ENCODE measurements at regions of chr19 and their contacts with region 1.

Region 1: GRCh38 chr19:31548941-31549340 is 199.7 kb upstream of the TSHZ3 start:
- DNase-seq: no peak
- ATAC-seq: peak in 1 of 4 donors; percentile 34
- H3K4me3 ChIP-seq: no peak overlapping the region
- H3K27ac ChIP-seq: no peak overlapping the region
- H3K4me1 ChIP-seq: no peaks in the 10 kb centered on the region
- H3K27me3 ChIP-seq: peaks cover 0 to 7% (median 0%) of the 10 kb centered on the region in 9 donors
- CTCF ChIP-seq: peak; percentile 31 to 60 (median 42)
- POLR2A ChIP-seq: no peak

Region 2: GRCh38 chr19:30669329-30670010 is 879.5 kb before region 1 on chr19:
- intact Hi-C with region 1: loop called in 3 of 10 experiments (anchors 10 kb)
- DNase-seq: peak; percentile 30 to 84 (median 57)
- ATAC-seq: peak in 3 of 4 donors; percentile 12 to 26 (median 21)
- H3K4me3 ChIP-seq: no peak overlapping the region
- H3K27ac ChIP-seq: no peak overlapping the region
- H3K4me1 ChIP-seq: peaks cover 0 to 25% (median 6%) of the 10 kb centered on the region in 12 donors
- H3K27me3 ChIP-seq: peaks cover 0 to 36% (median 11%) of the 10 kb centered on the region in 9 donors
- CTCF ChIP-seq: peak; percentile 61 to 85 (median 81)
- POLR2A ChIP-seq: no peak

Region 3: DNA sequence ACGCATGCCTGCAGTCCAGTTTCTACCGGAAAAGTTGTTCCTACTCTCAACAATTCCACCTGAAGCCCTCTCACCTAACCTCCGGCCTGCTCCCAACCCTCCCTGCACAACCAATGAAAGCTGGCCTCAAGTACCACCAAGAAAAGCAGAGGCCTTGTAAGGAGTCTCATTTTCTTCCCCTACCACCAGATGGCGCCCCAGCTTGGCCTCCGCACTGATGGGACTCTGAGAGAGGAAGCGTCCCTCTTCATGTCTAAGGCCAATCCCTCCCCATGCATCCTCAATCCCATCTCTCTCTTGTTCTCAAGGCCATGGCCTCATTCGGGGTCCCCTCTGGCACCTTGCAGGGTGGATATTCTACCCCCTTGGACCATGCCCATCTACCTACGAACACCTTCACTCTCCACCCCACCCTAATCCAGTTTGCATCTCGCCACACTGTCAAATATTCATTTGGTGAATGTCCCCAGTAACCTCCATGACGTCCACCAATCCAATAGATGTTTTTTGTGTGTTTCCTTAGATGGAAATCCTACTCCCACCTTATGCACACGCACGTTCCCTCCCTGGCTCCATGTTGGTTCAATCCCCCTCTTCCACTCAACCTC is 764.0 kb before region 1 on chr19:
- intact Hi-C with region 1: loop called in 1 of 10 experiments (anchors 10 kb)
- DNase-seq: peak; percentile 20 to 69 (median 44)
- ATAC-seq: peak in 3 of 4 donors; percentile 49 to 57 (median 54)
- H3K4me3 ChIP-seq: no peak overlapping the region
- H3K27ac ChIP-seq: no peak overlapping the region
- H3K4me1 ChIP-seq: no peaks in the 10 kb centered on the region
- H3K27me3 ChIP-seq: peaks cover 0 to 3% (median 0%) of the 10 kb centered on the region in 9 donors
- CTCF ChIP-seq: peak; percentile 31 to 74 (median 54)
- POLR2A ChIP-seq: no peak

Region 4: GRCh38 chr19:31676271-31677004 is 127.5 kb after region 1 on chr19:
- intact Hi-C with region 1: no loop called
- DNase-seq: no peak
- ATAC-seq: peak in 1 of 4 donors; percentile 29
- H3K4me3 ChIP-seq: no peak overlapping the region
- H3K27ac ChIP-seq: no peak overlapping the region
- H3K4me1 ChIP-seq: no peaks in the 10 kb centered on the region
- H3K27me3 ChIP-seq: no peaks in the 10 kb centered on the region
- CTCF ChIP-seq: peak in 7 of 12 donors; percentile 16 to 39 (median 31)
- POLR2A ChIP-seq: no peak

Measured in heart left ventricle (tissue), 16 donors.